AG04450 (cell line): ENCODE measurements at regions of chr22 and their contacts with region 1.

Region 1: DNA sequence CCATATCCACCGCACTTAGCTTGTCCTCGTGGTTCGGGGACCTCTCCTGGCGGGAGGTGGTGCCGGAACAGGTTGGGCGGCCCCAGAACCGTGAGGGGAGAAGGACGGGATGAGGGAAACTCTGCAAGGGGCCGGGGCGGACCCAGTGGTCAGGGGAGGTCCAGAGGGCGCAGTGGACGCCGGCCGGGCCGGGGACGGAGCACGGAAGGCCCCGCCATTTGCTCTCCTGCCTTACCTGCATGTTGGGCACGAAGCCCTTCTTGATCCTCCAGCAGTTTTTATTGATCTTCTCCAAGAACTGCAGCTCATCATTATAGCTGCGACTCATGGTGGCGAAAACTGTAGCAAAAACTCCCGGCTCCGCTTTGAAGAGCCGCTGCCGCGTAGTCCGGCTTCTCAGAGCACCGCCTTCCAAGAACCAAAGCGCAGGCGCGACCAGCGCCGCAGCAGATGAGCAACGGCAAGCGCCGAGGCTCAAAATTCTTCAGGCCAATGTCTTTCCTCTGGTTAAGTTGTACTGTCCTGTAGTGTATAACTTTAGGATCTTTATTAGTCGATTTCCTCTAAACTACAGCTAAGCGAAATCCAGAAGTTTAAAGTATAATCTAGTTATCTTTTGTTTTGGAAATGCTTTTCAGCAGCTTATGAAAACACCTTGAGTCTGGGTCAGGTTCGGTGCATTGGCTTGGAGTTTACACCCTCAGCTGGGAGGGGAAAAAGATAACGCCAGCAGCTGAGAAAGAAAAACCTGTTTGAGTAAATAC is at the start of gene RTCB:
- DNase-seq: peak; percentile 90
- H3K4me3 ChIP-seq: peak within 1 kb of the TSS; percentile 89
- H3K27ac ChIP-seq: peak within 1 kb of the TSS; percentile 59
- H3K27me3 ChIP-seq: peaks cover 7% of the 10 kb centered on the region
- CTCF ChIP-seq: no peak
- polyA plus RNA-seq, gene RTCB: 155 and 179 TPM in 2 replicates

Region 2: GRCh38 chr22:32469797-32470212 is 57.8 kb after region 1 on chr22:
- CTCF ChIA-PET with region 1: interaction called, 33 read pairs
- POLR2A ChIA-PET with region 1: interaction called, 4 read pairs
- DNase-seq: peak; percentile 32
- H3K4me3 ChIP-seq: no peak overlapping the region
- H3K27ac ChIP-seq: no peak overlapping the region
- H3K27me3 ChIP-seq: peaks cover 3% of the 10 kb centered on the region
- CTCF ChIP-seq: no peak

Region 3: GRCh38 chr22:32474635-32475467 is 62.8 kb after region 1 on chr22 and contains the start of gene FBXO7:
- CTCF ChIA-PET with region 1: interaction called, 33 read pairs
- POLR2A ChIA-PET with region 1: interaction called, 4 read pairs
- DNase-seq: peak; percentile 79
- H3K4me3 ChIP-seq: peak within 1 kb of the TSS; percentile 90
- H3K27ac ChIP-seq: peak within 1 kb of the TSS; percentile 90
- H3K27me3 ChIP-seq: no peaks in the 10 kb centered on the region
- CTCF ChIP-seq: peak; percentile 40
- polyA plus RNA-seq, gene FBXO7: 144 and 156 TPM in 2 replicates

Region 4: DNA sequence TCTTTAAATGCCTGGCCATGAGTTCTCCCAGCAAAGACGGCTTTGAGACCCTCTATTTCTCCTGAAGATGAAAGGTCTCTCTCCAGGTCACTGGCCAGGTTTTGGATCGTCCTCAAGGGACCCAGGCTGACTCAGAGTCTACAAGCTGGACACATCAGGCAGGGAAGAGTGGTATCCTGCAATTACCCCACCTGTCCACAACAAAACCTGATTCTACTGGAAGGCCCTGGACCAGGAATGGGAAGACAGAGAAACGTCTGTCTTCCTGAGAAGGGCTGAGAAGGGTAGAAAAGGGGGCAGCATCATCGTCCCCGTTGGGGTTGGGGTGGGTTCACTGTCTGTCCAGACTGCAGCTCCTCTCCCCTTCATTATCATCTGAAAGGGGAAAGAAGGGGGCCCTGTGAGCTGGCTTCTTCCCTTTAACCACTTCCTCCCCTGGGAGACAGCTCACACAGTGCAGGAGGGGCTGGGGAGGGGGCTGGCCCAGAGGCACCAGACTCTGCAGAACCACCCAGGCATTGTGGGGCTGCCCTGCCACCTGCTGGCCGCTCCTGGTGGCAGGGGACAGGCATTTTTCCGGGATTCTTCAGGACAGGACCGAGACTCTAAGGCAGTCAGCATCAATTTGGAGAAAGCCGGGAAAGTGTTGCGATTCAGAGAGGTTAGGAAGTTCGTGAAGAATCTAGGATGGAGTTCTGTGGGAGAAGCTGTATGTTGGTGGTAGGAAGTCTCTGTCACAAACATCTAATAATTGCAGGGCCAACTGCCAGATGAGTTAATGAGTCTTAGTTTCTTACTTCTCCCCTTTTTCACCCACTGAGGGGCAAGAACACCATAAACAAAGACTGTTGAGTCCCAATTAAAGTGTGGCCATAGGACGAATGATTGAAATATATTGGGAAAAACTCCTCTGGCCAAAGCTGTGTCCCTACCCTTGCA is 588.6 kb after region 1 on chr22:
- CTCF ChIA-PET with region 1: interaction called, 14 read pairs
- POLR2A ChIA-PET with region 1: no interaction called
- DNase-seq: no peak
- H3K4me3 ChIP-seq: no peak overlapping the region
- H3K27ac ChIP-seq: no peak overlapping the region
- H3K27me3 ChIP-seq: peaks cover 13% of the 10 kb centered on the region
- CTCF ChIP-seq: peak; percentile 91